Activated CD4-positive, alpha-beta T cell treated with anti-CD3 and anti-CD28 coated beads for 36 hours (primary cell): ENCODE measurements at regions of chr15 and their contacts with region 1.

Region 1: DNA sequence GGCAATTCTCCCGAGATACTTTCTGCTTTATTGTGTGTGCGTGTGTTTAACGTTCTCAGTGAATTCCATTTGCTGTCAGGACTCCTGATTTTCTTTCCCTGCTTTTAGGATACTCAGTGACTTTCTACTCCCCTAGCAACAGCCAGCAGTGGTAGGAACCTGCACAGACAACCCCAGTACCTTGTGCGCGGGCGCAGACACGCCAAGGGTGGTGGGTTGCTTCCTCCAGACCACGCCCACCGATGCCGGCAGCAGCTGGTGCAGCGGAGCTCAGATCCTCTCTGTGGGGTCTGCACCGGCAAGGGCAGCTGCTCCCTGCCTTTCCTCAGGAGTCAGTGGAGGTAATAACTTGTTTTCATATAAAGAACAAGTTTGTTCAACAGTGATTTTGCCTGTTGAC is 225.1 kb upstream of the NDN start:
- DNase-seq: no peak
- ATAC-seq: no peak
- H3K4me3 Mint-ChIP-seq: no peak overlapping the region
- H3K27ac Mint-ChIP-seq: no peak overlapping the region
- H3K4me1 Mint-ChIP-seq: no peaks in the 10 kb centered on the region
- H3K27me3 Mint-ChIP-seq: no peaks in the 10 kb centered on the region

Region 2: DNA sequence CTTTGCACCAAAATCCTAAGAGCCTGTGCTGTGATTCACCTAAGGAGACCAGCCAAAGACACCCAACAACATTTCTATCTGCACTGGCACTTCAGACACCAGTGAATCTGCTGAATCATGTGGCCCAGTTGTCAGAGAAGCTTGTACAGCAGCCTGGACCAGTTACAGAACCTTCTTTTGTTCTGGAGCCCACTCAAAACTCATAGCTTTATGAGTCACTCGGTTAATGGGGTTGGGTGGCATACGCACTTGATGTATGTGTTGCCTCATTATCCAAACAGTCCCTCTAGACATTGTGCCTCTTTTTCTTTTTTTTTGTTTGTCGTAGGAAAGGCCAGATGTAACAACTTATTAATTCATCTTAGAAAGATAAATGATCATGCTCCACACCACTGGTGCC is 439.5 kb before region 1 on chr15:
- CTCF ChIA-PET with region 1: no interaction called
- POLR2A ChIA-PET with region 1: no interaction called
- intact Hi-C with region 1: no loop called
- DNase-seq: no peak
- ATAC-seq: no peak
- H3K4me3 Mint-ChIP-seq: no peak overlapping the region
- H3K27ac Mint-ChIP-seq: no peak overlapping the region
- H3K4me1 Mint-ChIP-seq: no peaks in the 10 kb centered on the region
- H3K27me3 Mint-ChIP-seq: no peaks in the 10 kb centered on the region

Region 3: DNA sequence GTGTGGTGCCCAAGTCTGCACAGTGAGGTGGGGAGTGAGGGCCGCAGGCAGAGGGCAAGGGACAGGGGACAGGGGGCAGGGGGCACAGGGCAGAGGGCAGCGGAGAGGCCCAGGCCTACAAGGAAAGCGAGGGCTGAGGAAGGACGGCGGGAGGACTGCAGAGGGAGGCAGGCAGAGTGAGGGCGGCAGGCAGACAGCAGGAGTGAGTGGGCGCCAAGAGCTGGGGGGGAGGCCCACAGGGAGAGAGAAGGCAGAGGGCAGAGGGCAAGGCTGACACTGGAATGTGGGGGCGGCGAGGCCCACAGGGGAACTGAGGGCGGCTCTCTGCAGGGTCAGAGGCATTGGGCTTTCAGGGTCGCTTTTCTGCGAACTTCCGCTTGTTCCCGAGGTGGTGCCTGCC is 42.7 kb after region 1 on chr15:
- CTCF ChIA-PET with region 1: no interaction called
- POLR2A ChIA-PET with region 1: no interaction called
- intact Hi-C with region 1: loop called in 1 of 2 experiments (anchors 5 kb)
- DNase-seq: no peak
- ATAC-seq: no peak
- H3K4me3 Mint-ChIP-seq: no peak overlapping the region
- H3K27ac Mint-ChIP-seq: no peak overlapping the region
- H3K4me1 Mint-ChIP-seq: no peaks in the 10 kb centered on the region
- H3K27me3 Mint-ChIP-seq: no peaks in the 10 kb centered on the region